ENCODE measurements at regions of chr20 and their contacts with region 1.

Region 1: DNA sequence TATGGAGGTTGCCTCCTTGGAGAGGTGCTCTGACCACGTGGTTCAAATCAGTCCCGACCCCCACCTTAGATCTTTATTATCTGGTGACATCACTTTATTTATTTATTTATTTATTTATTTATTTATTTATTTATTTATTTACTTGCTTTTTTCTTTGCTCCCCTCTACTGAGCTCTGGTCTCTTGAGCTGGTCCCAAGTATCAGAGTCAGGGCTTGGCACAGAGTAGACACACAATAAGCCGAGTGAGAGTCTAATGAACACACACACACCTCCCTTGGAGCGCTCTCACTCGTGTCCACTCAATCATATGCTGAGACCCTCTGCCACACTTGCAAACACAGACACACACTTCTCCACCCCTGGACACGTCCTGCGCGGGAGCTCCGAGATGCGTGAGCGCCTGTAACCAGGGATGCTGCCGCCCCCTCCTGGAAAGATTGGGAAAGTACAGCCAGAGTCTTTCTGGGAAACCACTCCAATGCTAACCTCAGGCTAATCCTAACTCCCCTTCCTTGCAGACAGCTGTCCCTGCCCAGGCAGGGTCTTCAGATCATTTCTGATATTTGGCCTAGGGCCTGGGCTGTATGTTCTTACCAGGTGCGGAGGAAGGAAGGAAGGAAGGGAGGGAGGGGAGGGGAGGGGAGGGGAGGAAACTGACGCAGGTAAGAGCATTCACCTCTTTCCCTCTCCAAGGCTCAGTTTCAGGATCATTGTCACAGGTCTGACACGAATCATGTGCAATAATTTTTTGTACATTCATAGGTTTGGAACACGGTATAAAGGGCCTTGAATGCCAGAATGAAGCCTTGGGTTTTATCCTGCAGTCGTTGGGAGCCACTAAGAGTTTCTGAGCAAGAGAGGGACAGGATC is 70.9 kb downstream of the STK35 start:
- DNase-seq: no peak
- H3K4me3 ChIP-seq: peak overlapping the region in 1 of 4 donors; percentile 21
- H3K27ac ChIP-seq: no peak overlapping the region
- H3K4me1 ChIP-seq: peaks cover 0 to 5% (median 2%) of the 10 kb centered on the region in 3 donors
- H3K27me3 ChIP-seq: peaks cover 0 to 43% (median 0%) of the 10 kb centered on the region in 4 donors
- CTCF ChIP-seq: peak; percentile 58 to 93 (median 87)
- POLR2A ChIP-seq: no peak

Region 2: GRCh38 chr20:1764136-1765033 is 408.2 kb before region 1 on chr20:
- intact Hi-C with region 1: loop called (anchors 10 kb)
- DNase-seq: no peak
- H3K4me3 ChIP-seq: no peak overlapping the region
- H3K27ac ChIP-seq: no peak overlapping the region
- H3K4me1 ChIP-seq: peaks cover 0 to 7% (median 0%) of the 10 kb centered on the region in 3 donors
- H3K27me3 ChIP-seq: peaks cover 0 to 13% (median 0%) of the 10 kb centered on the region in 4 donors
- CTCF ChIP-seq: peak; percentile 49 to 79 (median 71)
- POLR2A ChIP-seq: no peak

Region 3: DNA sequence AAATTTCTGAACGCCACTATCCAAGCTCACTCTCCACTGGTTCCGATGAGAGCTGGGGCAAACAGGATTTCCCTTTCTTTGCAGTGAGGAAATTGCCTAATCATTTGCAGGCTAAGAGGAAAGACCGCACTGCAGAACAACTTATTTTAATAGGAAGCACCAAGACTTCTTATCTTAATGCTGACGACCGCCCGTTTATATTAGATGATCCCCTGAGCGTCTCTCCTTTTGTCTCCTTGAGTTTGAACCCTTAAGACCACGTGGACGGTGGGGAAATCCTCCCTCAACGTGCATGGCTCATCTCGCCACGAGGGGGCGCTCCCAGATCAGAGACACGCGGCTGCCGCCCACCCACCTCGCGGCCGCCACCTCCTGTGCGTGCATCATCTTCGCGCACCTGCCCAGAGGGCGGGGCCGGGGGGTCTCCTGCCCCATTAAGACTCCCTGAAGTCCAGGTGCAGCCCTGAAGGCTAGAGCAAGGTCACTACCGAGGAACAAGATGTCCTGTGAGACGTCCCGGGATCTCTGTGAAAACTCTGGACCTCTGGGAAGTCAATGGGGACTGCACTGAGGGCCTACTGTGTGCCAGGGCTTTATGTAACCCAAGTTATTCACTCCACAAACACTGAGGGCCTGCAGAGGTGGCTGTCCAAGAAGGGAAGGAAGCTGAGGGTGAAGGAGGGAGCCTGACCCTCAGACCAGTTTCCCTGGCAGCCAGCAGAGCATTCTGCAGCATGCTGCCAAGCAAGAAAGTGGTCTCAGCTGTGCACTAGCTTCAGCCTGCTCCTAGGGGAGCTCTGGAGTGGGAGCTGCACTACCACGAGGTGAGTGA is 206.8 kb before region 1 on chr20:
- intact Hi-C with region 1: loop called (anchors 5 kb)
- DNase-seq: no peak
- H3K4me3 ChIP-seq: peak overlapping the region in 1 of 4 donors; percentile 40
- H3K27ac ChIP-seq: no peak overlapping the region
- H3K4me1 ChIP-seq: peaks cover 7 to 13% (median 7%) of the 10 kb centered on the region in 3 donors
- H3K27me3 ChIP-seq: peaks cover 0 to 45% (median 0%) of the 10 kb centered on the region in 4 donors
- CTCF ChIP-seq: peak; percentile 82 to 92 (median 88)
- POLR2A ChIP-seq: no peak

Region 4: GRCh38 chr20:1987826-1988225 is 184.7 kb before region 1 on chr20:
- intact Hi-C with region 1: no loop called
- DNase-seq: no peak
- H3K4me3 ChIP-seq: no peak overlapping the region
- H3K27ac ChIP-seq: no peak overlapping the region
- H3K4me1 ChIP-seq: no peaks in the 10 kb centered on the region
- H3K27me3 ChIP-seq: peaks cover 0 to 84% (median 2%) of the 10 kb centered on the region in 4 donors
- CTCF ChIP-seq: no peak
- POLR2A ChIP-seq: no peak

Region 5: DNA sequence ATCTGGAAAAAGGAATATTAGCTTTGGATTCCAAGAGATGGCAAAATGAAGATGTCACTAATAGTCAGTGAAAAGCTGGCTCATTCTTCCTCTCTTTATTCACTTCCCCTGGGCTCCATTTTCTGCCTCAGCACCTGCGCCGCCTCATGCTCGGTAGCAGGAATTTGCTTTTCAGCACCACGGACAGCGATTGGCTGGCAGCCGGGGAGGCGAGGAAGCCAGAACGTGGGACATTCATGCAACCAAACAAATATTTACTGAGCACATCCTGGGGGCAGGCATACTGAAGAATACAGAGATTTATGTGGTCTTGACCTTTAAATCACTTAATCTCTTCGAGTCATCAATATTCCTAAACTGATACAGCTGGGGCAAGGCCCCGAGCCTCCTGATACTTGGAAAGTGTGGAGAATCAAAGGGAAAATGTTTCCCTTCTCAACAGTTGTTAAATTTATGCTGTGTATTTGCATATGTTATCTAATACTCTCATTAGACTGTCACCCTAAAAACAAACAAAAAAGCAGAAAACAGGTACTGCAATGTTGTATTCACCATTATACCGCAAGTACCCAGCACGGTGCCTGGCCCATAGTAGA is 166.6 kb before region 1 on chr20:
- intact Hi-C with region 1: loop called (anchors 10 kb)
- DNase-seq: no peak
- H3K4me3 ChIP-seq: no peak overlapping the region
- H3K27ac ChIP-seq: no peak overlapping the region
- H3K4me1 ChIP-seq: no peaks in the 10 kb centered on the region
- H3K27me3 ChIP-seq: peaks cover 0 to 77% (median 0%) of the 10 kb centered on the region in 4 donors
- CTCF ChIP-seq: no peak
- POLR2A ChIP-seq: no peak

Region 6: DNA sequence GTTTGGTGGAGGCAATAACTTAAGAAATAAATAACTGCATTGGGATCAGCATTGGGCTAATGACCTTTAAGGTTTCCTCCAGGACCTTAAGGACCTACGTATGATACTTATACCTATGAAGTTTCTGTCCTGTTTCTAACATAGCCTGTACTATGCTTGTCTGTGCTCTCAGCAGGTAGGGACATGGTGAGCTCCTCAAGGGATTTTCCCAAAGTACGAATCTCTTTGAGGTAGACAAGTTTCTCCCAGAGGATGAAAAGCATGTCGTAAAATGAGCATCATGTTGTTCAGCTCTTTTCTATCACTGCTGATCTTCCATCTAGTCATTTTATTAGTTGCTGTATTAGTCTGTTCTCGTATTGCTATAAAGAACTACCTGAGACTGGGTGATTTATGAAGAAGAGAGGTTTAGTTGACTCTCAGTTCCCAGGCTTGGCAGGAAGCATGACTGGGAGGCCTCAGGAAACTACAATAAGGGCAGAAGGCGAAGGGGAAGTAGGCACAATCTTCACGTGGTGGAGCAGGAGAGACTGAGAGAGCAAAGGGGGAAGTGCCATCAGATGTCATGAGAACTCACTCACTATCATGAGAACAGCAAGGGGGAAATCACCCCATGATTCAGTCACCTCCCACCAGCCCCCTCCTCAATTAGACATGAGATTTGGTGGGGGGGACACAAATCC is 45.5 kb after region 1 on chr20:
- intact Hi-C with region 1: no loop called
- DNase-seq: no peak
- H3K4me3 ChIP-seq: no peak overlapping the region
- H3K27ac ChIP-seq: peak overlapping the region in 2 of 4 donors; percentile 36 to 39
- H3K4me1 ChIP-seq: peaks cover 0 to 9% (median 0%) of the 10 kb centered on the region in 3 donors
- H3K27me3 ChIP-seq: peaks cover 0 to 5% (median 0%) of the 10 kb centered on the region in 4 donors
- CTCF ChIP-seq: no peak
- POLR2A ChIP-seq: no peak